Activated CD4-positive, alpha-beta T cell treated with anti-CD3 and anti-CD28 coated beads for 36 hours (primary cell): ENCODE measurements at regions of chr16 and their contacts with region 1.

Region 1: DNA sequence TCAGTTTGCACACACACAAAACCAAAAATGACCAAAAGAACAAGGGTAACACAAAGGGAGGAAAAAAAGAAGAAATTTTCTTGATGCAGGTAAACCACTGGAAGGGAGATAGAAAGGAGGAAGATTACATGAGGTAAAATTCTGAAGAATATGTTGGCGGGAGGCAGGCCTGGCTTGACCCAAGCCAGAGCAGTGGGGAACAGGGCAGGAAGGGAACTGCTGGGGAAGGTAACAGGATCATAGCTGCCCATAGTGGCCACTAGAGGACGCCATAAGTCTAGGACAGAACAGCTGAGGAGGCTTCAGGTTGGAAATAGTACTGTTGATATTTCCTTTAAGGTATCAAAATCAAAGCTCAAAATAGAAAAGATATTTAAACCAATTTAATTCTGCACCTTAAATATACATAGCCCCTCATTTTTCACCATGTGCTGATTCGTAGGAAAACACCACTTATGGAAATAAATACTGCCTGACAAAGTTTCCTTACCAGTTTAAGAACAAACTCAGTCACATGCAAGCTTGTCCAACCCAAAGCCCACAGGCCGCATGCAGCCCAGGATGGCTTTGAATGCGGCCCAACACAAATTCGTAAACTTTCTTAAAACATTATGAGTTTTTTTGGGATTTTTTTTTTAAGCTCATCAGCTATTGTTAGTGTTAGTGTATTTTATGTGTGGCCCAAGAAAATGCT is 15.5 kb downstream of the VPS35 start:
- DNase-seq: peak; percentile 67
- ATAC-seq: peak; percentile 95
- H3K4me3 Mint-ChIP-seq: no peak overlapping the region
- H3K27ac Mint-ChIP-seq: no peak overlapping the region
- H3K4me1 Mint-ChIP-seq: no peaks in the 10 kb centered on the region
- H3K27me3 Mint-ChIP-seq: no peaks in the 10 kb centered on the region

Region 2: DNA sequence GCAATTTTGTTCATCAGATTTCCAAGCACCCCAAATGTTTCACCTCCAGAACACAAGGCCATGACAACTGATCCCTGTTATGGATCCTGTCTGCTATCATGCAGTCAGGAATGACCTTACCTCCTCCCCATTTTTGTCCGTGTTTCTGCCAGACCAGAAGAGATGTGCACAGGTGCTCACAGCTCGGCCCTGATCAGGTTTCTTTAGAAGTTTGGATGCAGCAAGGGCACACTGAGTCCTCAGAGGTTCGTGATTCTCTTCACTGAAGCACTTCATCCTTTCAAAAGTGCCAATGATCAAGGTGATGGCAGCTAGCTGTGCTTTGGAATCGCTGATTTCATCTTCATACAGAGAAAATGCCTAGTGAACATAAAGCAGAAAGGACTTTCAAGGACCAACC is 11.3 kb before region 1 on chr16:
- CTCF ChIA-PET with region 1: interaction called, 21 read pairs
- POLR2A ChIA-PET with region 1: interaction called, 3 read pairs
- intact Hi-C with region 1: no loop called
- DNase-seq: no peak
- ATAC-seq: no peak
- H3K4me3 Mint-ChIP-seq: no peak overlapping the region
- H3K27ac Mint-ChIP-seq: no peak overlapping the region
- H3K4me1 Mint-ChIP-seq: peaks cover 17% of the 10 kb centered on the region
- H3K27me3 Mint-ChIP-seq: no peaks in the 10 kb centered on the region

Region 3: GRCh38 chr16:46801428-46802049 is 128.1 kb after region 1 on chr16:
- CTCF ChIA-PET with region 1: interaction called, 10 read pairs
- POLR2A ChIA-PET with region 1: no interaction called
- intact Hi-C with region 1: no loop called
- DNase-seq: no peak
- ATAC-seq: no peak
- H3K4me3 Mint-ChIP-seq: no peak overlapping the region
- H3K27ac Mint-ChIP-seq: no peak overlapping the region
- H3K4me1 Mint-ChIP-seq: peaks cover 19% of the 10 kb centered on the region
- H3K27me3 Mint-ChIP-seq: no peaks in the 10 kb centered on the region

Region 4: GRCh38 chr16:46883690-46884512 is 210.4 kb after region 1 on chr16 and contains the start of gene GPT2:
- CTCF ChIA-PET with region 1: interaction called, 12 read pairs
- POLR2A ChIA-PET with region 1: no interaction called
- intact Hi-C with region 1: no loop called
- DNase-seq: peak; percentile 91
- ATAC-seq: peak; percentile 96
- H3K4me3 Mint-ChIP-seq: peak within 1 kb of the TSS; percentile 80
- H3K27ac Mint-ChIP-seq: peak within 1 kb of the TSS; percentile 94
- H3K4me1 Mint-ChIP-seq: peaks cover 10% of the 10 kb centered on the region
- H3K27me3 Mint-ChIP-seq: peaks cover 24% of the 10 kb centered on the region
- total RNA-seq, gene GPT2: 25.6 to 34.9 TPM

Region 5: DNA sequence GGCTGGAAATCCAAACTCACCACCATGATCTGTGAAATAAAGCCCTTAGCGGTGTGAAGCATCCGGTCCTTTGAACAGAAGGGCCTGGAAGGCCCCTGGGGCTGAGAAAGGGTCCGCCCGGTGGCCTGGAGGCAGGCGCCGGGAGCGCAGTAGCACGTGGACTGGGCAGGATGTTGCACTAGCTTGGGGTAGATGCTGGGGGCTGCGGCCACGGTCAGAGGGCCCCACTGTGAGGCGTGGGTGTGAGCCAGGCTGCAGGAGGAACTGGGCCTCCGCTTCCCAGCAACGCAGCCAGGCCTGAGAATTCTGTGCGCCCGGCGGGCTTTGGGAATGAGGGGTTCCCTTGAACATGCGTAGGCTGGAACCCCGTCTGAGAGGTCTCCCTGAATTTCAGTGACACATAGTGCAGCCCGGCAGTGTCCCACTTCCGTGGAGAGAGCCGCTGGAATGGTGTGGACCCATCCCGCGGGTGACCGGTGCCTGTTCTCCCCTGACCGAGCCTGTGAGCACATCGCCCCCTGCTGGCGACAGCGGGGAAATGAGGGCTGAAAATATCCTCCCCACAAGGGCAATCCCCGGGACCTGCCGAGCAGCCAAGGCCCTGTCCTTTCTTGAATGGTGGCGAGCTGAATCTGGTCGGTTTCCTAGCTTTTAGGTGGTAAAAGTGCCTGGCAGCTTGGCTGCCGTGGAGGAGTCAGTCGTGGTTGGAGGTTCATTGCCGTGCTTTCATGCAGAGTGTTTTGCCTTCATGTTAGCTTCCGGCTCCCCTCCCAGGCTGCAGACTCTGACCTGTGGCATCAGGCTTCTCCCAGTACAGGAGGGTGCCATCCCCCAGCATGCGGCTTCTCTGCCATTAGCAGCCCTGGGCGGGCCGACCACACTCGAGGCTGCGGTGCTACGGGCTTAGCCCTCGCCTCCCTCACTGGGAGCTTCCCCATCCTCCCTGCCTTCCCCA is 256.2 kb after region 1 on chr16:
- CTCF ChIA-PET with region 1: interaction called, 27 read pairs
- POLR2A ChIA-PET with region 1: interaction called, 5 read pairs
- intact Hi-C with region 1: loop called (anchors 1 kb)
- DNase-seq: peak; percentile 82
- ATAC-seq: peak; percentile 87
- H3K4me3 Mint-ChIP-seq: no peak overlapping the region
- H3K27ac Mint-ChIP-seq: no peak overlapping the region
- H3K4me1 Mint-ChIP-seq: peaks cover 4% of the 10 kb centered on the region
- H3K27me3 Mint-ChIP-seq: no peaks in the 10 kb centered on the region